ENCODE measurements at regions of chr14 and their contacts with region 1.

Region 1: DNA sequence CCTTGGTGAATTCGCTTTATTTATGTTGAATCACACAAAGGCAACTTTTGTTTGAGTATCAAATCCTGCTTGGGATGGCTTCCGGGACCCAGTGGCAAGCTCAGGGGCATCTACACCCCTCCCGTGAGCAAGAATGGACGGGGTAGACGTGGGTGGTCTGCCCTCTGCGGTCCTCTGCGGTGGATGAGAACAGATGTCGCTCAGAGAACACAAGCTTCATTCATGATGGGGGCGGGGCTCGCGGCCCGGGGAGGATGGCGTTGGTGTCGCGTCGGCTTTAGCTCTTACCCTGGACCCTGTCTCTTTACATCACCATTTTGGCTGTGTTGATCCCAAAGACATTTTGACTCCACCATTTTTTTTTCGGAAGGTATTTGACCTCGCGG is 158.5 kb upstream of the RTL1 start:
- DNase-seq: no peak
- H3K4me3 ChIP-seq: no peak overlapping the region
- H3K27ac ChIP-seq: peak overlapping the region; percentile 77
- H3K4me1 ChIP-seq: peaks cover 42% of the 10 kb centered on the region
- H3K27me3 ChIP-seq: no peaks in the 10 kb centered on the region
- CTCF ChIP-seq: no peak
- POLR2A ChIP-seq: no peak

Region 2: DNA sequence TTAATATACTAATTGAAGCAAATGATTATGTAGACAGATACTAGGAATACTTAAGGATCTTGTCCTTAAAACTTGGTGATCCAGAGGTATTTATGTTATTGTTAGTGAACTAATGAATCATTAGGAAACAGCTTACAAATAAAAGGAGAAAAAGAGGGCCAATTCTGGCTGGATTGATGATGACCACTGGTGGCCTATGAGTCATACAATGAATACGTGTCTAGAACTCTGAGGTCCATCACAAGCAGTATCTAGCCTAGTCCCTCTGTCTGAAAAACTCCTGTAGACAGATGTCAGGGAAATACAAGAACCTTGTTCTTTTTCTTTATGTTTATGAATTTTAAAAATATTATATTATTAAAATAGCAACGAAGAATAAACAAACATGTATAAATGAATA is 106.9 kb before region 1 on chr14:
- CTCF ChIA-PET with region 1: no interaction called
- POLR2A ChIA-PET with region 1: no interaction called
- dilution Hi-C with region 1: no loop called
- intact Hi-C with region 1: no loop called
- DNase-seq: peak; percentile 50
- H3K4me3 ChIP-seq: no peak overlapping the region
- H3K27ac ChIP-seq: no peak overlapping the region
- H3K4me1 ChIP-seq: peaks cover 7% of the 10 kb centered on the region
- H3K27me3 ChIP-seq: no peaks in the 10 kb centered on the region
- CTCF ChIP-seq: no peak
- POLR2A ChIP-seq: no peak

Region 3: GRCh38 chr14:101090976-101091375 is 28.9 kb after region 1 on chr14:
- CTCF ChIA-PET with region 1: interaction called, 3 read pairs
- POLR2A ChIA-PET with region 1: no interaction called
- dilution Hi-C with region 1: no loop called
- intact Hi-C with region 1: loop called (anchors 2 kb)
- DNase-seq: peak; percentile 69
- H3K4me3 ChIP-seq: no peak overlapping the region
- H3K27ac ChIP-seq: peak overlapping the region; percentile 65
- H3K4me1 ChIP-seq: peaks cover 11% of the 10 kb centered on the region
- H3K27me3 ChIP-seq: no peaks in the 10 kb centered on the region
- CTCF ChIP-seq: no peak
- POLR2A ChIP-seq: no peak

Region 4: GRCh38 chr14:101120641-101121507 is 58.8 kb after region 1 on chr14:
- CTCF ChIA-PET with region 1: no interaction called
- POLR2A ChIA-PET with region 1: no interaction called
- dilution Hi-C with region 1: no loop called
- intact Hi-C with region 1: no loop called
- DNase-seq: no peak
- H3K4me3 ChIP-seq: no peak overlapping the region
- H3K27ac ChIP-seq: no peak overlapping the region
- H3K4me1 ChIP-seq: peaks cover 8% of the 10 kb centered on the region
- H3K27me3 ChIP-seq: no peaks in the 10 kb centered on the region
- CTCF ChIP-seq: no peak
- POLR2A ChIP-seq: no peak

Region 5: DNA sequence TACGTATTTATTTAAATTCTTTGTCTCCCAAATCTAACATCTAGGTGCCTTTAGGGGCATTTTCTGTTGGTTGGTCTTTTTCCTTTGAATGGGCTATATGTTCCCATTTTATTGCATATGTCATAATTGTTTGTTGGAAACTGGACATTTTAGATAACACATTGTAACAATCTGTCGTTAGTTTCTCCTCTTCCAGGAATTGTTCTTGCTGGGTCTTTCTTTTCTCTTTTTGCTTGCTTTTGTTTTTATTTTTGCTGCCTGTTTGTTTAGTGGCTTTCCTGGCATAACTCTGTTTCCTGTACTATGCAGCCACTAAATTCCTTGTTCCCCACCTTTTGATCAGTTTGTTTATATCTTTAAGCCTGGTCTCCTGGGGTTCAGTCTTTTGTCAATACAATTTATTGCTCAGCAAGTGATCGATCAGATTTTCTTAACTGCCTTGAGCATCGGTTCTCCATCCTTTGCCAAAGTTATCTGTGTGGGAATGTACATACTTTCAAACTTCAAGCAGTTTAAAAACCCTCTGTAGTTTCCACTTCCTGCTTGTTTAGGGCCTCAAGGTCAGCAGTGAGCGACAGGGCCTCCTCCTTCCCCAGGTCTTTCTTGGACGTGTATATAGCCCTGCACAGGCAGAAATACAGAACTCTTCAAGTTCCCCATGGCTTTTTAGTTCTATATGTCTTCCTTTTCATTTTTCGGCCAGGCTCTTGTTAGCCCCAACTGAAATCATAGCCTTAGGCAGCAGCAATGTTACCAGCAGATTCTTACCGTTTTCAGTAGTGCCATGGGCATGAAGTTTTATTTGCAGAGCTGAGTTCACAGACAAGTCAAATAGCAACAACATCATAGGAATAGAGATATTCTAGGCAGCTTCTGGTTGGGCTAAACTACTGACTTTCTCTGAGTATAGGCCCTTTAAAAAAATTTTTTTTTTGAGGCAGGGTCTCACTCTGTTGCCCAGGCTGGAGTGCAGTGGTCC is 86.1 kb after region 1 on chr14:
- CTCF ChIA-PET with region 1: no interaction called
- POLR2A ChIA-PET with region 1: no interaction called
- dilution Hi-C with region 1: no loop called
- intact Hi-C with region 1: loop called (anchors 1 kb)
- DNase-seq: peak; percentile 71
- H3K4me3 ChIP-seq: no peak overlapping the region
- H3K27ac ChIP-seq: peak overlapping the region; percentile 79
- H3K4me1 ChIP-seq: peaks cover 43% of the 10 kb centered on the region
- H3K27me3 ChIP-seq: no peaks in the 10 kb centered on the region
- CTCF ChIP-seq: no peak
- POLR2A ChIP-seq: no peak

Region 6: DNA sequence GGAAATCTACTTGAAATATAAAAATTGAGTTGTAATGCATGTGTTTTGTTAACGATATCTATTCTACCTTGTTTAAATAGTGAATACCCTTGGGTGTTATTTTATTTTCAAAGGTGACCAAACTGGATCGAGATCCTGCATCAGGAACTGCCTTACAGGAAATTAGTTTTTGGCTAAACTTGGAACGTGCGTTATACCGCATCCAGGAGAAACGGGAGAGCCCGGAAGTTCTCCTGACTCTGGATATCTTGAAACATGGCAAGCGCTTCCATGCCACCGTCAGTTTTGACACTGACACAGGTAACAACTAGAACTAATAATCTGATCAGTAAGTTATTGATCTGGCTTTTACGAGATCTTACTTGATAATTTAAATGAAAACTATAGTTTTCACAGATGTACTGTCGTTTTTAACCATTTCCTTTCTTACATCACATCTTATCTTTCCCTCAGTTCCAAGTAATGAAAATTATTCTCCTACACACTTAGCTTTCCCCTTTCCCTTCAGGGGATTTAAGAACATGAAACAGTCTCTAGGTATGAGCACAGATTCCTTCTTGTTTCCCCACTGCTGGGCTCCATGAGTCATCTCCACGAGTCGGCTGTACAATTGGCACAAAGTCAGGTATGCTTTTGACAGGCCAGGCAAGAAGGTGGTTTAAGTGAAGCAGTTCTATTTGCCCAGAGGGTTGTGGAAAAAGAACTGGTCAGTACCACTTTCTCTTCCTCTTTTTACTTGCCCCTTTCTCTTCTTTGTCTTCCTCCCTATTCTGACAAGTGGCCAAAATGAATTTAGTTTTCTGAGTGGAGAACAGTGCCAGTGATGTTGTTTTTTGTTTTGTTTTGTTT is 918.4 kb after region 1 on chr14:
- CTCF ChIA-PET with region 1: no interaction called
- POLR2A ChIA-PET with region 1: no interaction called
- dilution Hi-C with region 1: no loop called
- intact Hi-C with region 1: no loop called
- DNase-seq: peak; percentile 90
- H3K4me3 ChIP-seq: no peak overlapping the region
- H3K27ac ChIP-seq: no peak overlapping the region
- H3K4me1 ChIP-seq: peaks cover 8% of the 10 kb centered on the region
- H3K27me3 ChIP-seq: no peaks in the 10 kb centered on the region
- CTCF ChIP-seq: no peak
- POLR2A ChIP-seq: no peak